ENCODE measurements at regions of chr9 and their contacts with region 1.

Region 1: GRCh38 chr9:27117489-27118135 is 8.6 kb downstream of the TEK start:
- DNase-seq: peak; percentile 88

Region 2: DNA sequence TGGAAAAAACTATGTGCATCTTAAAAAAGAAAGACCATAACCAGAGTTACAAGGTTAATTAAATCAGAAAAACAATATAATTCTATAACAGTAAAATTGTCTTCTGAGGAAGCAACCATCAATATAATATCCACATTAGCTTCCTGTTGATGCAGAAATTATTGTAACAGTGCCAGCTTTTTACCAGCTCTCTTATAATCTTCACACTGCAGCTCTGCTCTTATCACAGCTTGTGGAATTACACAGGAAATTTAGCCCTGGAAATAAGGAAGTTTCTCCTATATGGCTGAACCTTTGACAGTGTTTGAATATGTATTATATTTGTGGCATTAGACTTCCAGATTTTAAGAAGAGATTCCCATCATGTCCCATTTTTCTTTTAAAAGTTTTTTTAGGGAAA is 57.7 kb before region 1 on chr9:
- intact Hi-C with region 1: no loop called
- DNase-seq: no peak

Region 3: GRCh38 chr9:27154908-27155307 is 37.3 kb after region 1 on chr9:
- intact Hi-C with region 1: loop called (anchors 5 kb)
- DNase-seq: no peak

Region 4: DNA sequence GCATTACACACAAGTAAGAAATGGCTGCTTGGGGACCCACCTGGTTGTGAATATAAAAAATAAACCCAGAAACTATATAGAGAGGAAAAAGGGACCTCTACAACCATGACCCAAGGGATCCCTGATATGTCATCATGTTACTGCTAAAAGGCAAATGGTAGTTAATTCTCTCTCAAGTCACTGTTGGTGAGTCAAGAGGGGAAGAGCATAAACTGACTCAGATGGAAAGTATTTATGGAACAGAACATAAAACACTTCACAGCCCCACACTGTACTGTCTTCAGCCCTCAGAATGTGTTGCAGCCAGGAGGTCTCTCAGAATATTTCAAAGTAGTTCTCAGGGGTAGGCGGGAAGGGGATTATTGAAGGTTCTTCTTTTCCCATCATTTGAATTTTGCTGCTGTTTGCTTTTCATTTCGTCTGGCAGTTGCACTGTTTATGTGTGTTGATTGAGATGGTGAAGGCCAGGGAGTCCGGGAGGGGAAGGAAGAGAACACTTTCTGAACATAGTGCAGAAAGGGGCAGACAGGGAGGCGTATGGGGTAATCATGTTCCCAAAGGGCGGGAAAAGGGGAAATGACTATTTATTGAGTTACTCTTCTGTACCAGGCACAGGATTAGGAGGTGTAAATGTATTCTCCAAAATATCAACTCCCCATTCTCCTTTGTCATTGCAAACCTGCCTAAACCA is 76.9 kb after region 1 on chr9:
- intact Hi-C with region 1: loop called (anchors 2 kb)
- DNase-seq: no peak

Measured in cardiac septum (tissue), 1 donor.